A549 (cell line): ENCODE measurements at regions of chr1 and their contacts with region 1.

Region 1: GRCh38 chr1:165383067-165383466 is 26.6 kb upstream of the LMX1A start:
- DNase-seq: no peak
- ATAC-seq: no peak
- H3K4me3 ChIP-seq: no peak overlapping the region
- H3K27ac ChIP-seq: no peak overlapping the region
- H3K4me1 ChIP-seq: no peaks in the 10 kb centered on the region
- CTCF ChIP-seq: no peak
- EP300 ChIP-seq: no peak
- POLR2A ChIP-seq: no peak
- RAD21 ChIP-seq: no peak

Region 2: DNA sequence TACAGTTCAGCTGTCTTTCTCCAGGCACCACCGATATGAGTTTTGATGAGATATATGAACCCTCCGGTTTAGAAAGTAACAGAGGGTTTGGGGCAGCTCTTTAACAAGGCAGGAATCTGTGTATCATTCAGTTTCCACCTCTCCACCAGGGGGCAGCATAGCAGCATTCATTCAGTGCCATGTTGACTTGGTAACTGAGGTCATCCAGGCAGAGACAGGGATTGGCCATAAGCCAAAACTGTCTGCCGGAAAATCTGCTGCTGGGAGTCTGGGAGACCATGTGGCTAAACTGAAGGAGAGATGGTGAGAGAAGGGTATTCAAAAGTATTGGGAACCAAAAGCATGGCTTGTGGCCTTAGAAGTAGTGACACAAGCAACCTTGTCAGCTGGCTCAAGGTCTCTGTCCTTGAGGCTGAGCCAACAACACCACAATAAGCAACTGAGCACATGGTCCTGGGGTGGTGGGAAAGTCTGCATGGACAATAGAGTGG is 125.1 kb before region 1 on chr1:
- CTCF ChIA-PET with region 1: interaction called, 11 read pairs
- POLR2A ChIA-PET with region 1: no interaction called
- DNase-seq: peak; percentile 61 to 65
- ATAC-seq: peak; percentile 70 to 92; a peak in 5 of 6 replicates
- H3K4me3 ChIP-seq: no peak overlapping the region
- H3K27ac ChIP-seq: no peak overlapping the region
- H3K4me1 ChIP-seq: no peaks in the 10 kb centered on the region
- CTCF ChIP-seq: peak; percentile 56
- EP300 ChIP-seq: no peak
- POLR2A ChIP-seq: no peak
- RAD21 ChIP-seq: peak; percentile 63 to 71